Ovary (tissue), 10 donors: ENCODE measurements at regions of chr10 and their contacts with region 1.

Region 1: DNA sequence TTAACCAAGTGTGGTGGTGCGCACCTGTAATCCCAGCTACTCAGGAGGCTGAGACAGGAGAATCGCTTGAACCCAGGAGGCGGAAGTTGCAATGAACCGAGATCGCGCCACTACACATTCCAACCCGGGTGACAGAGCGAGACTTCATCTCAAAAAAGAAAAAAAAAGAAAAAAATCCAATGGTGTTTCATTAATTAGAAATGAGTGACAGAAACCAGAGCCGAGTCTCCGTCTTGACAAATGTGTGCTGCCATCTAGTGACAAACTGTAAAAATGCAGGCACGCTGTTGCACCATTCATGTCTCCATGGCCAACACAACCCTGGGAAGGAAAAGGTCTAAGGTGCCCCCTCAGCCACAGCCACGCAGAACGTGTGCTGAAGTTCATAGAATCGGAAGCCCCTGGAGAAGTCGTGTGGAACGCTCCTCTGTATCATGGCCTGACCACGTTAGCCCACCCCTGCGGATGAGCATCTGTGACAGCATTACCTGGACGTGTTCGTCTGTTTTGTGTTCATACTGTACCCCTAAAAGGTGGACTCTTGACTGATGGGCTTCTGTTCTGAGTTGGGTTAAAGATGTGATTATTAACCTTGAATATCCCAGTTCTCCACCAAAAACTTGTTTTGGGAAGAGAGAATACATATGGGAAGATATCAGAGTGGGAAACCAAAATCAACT is 94.9 kb downstream of the LYZL2 start:
- DNase-seq: peak; percentile 58 to 81 (median 64)
- H3K4me3 ChIP-seq: no peak overlapping the region
- H3K27ac ChIP-seq: no peak overlapping the region
- H3K4me1 ChIP-seq: peaks cover 4% of the 10 kb centered on the region
- H3K27me3 ChIP-seq: no peaks in the 10 kb centered on the region
- CTCF ChIP-seq: peak; percentile 74 to 86 (median 77)
- EP300 ChIP-seq: no peak
- POLR2A ChIP-seq: no peak

Region 2: GRCh38 chr10:30392564-30392990 is 142.0 kb before region 1 on chr10:
- intact Hi-C with region 1: loop called in 3 of 4 experiments (anchors 1 to 10 kb)
- DNase-seq: peak; percentile 61 to 80 (median 77)
- H3K4me3 ChIP-seq: no peak overlapping the region
- H3K27ac ChIP-seq: no peak overlapping the region
- H3K4me1 ChIP-seq: peaks cover 7% of the 10 kb centered on the region
- H3K27me3 ChIP-seq: no peaks in the 10 kb centered on the region
- CTCF ChIP-seq: peak; percentile 75 to 83 (median 76)
- EP300 ChIP-seq: no peak
- POLR2A ChIP-seq: no peak

Region 3: GRCh38 chr10:30404540-30404939 is 130.1 kb before region 1 on chr10:
- intact Hi-C with region 1: loop called in 2 of 4 experiments (anchors 5 to 10 kb)
- DNase-seq: no peak
- H3K4me3 ChIP-seq: no peak overlapping the region
- H3K27ac ChIP-seq: no peak overlapping the region
- H3K4me1 ChIP-seq: no peaks in the 10 kb centered on the region
- H3K27me3 ChIP-seq: no peaks in the 10 kb centered on the region
- CTCF ChIP-seq: no peak
- EP300 ChIP-seq: no peak
- POLR2A ChIP-seq: no peak

Region 4: DNA sequence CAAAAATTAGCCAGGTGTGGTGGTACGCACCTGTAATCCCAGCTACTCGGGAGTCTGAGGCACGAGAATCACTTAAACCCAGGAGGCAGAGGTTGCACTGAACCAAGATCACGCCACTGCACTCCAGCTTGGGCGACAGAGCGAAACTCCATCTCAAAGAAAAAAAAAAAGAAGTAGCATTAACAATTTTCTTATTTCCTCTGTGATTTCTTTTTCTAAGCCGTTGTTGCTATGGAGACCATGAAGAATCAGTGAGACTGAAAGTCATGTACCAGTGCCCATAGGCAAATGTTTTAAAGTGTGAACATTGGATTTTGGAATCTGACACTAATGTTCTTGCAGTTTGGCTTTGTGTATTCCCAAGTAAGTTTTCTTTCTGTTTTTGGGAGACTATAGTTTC is 119.0 kb before region 1 on chr10:
- intact Hi-C with region 1: loop called in 3 of 4 experiments (anchors 2 to 5 kb)
- DNase-seq: no peak
- H3K4me3 ChIP-seq: no peak overlapping the region
- H3K27ac ChIP-seq: no peak overlapping the region
- H3K4me1 ChIP-seq: no peaks in the 10 kb centered on the region
- H3K27me3 ChIP-seq: no peaks in the 10 kb centered on the region
- CTCF ChIP-seq: no peak
- EP300 ChIP-seq: no peak
- POLR2A ChIP-seq: no peak

Region 5: GRCh38 chr10:30591249-30591670 is 56.7 kb after region 1 on chr10:
- intact Hi-C with region 1: loop called in 2 of 4 experiments (anchors 10 kb)
- DNase-seq: peak in 2 of 5 donors; percentile 24 to 41
- H3K4me3 ChIP-seq: no peak overlapping the region
- H3K27ac ChIP-seq: no peak overlapping the region
- H3K4me1 ChIP-seq: no peaks in the 10 kb centered on the region
- H3K27me3 ChIP-seq: no peaks in the 10 kb centered on the region
- CTCF ChIP-seq: peak; percentile 60 to 90 (median 78)
- EP300 ChIP-seq: no peak
- POLR2A ChIP-seq: no peak